ENCODE measurements at regions of chr6 and their contacts with region 1.

Region 1: GRCh38 chr6:157667211-157668008 is 155.6 kb upstream of the SNX9 start:
- DNase-seq: peak; percentile 71
- ATAC-seq: peak; percentile 65
- H3K4me3 Mint-ChIP-seq: no peak overlapping the region
- H3K27ac Mint-ChIP-seq: no peak overlapping the region
- H3K4me1 Mint-ChIP-seq: peaks cover 23% of the 10 kb centered on the region
- H3K27me3 Mint-ChIP-seq: peaks cover 3% of the 10 kb centered on the region
- CTCF ChIP-seq: peak; percentile 99

Region 2: GRCh38 chr6:157314705-157315321 is 352.6 kb before region 1 on chr6:
- CTCF ChIA-PET with region 1: interaction called, 80 read pairs
- POLR2A ChIA-PET with region 1: interaction called, 4 read pairs
- intact Hi-C with region 1: loop called (anchors 2 kb)
- DNase-seq: peak; percentile 32
- ATAC-seq: peak; percentile 93
- H3K4me3 Mint-ChIP-seq: no peak overlapping the region
- H3K27ac Mint-ChIP-seq: no peak overlapping the region
- H3K4me1 Mint-ChIP-seq: peaks cover 6% of the 10 kb centered on the region
- H3K27me3 Mint-ChIP-seq: no peaks in the 10 kb centered on the region
- CTCF ChIP-seq: peak; percentile 90

Region 3: GRCh38 chr6:157323255-157323965 is 344.0 kb before region 1 on chr6 and contains the start of gene TMEM242:
- CTCF ChIA-PET with region 1: interaction called, 10 read pairs
- POLR2A ChIA-PET with region 1: no interaction called
- intact Hi-C with region 1: no loop called
- DNase-seq: peak; percentile 91
- ATAC-seq: peak; percentile 94
- H3K4me3 Mint-ChIP-seq: peak within 1 kb of the TSS; percentile 91
- H3K27ac Mint-ChIP-seq: peak within 1 kb of the TSS; percentile 88
- H3K4me1 Mint-ChIP-seq: peaks cover 31% of the 10 kb centered on the region
- H3K27me3 Mint-ChIP-seq: peaks cover 21% of the 10 kb centered on the region
- CTCF ChIP-seq: peak; percentile 16
- total RNA-seq, gene TMEM242: 7.8 to 8.0 TPM

Region 4: DNA sequence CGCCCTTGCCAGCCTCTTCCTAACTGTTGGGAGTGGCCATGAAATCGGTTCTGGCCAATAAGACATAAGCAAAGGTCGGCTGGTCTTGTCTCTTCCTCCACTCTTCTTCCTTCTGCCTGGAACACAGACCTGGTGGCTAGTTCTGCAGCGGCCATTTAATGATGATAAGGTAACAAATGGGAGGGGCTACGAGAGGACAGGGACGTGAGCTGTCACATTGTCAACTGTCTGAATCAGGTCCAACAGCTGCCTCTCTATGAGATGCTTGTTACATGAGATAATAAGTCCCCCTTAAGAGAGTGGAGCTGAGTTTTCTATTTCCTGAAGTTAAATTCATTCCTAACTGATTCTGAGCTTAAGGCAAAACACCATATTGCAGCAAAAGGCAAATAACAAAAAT is 331.6 kb before region 1 on chr6:
- CTCF ChIA-PET with region 1: interaction called, 12 read pairs
- POLR2A ChIA-PET with region 1: no interaction called
- intact Hi-C with region 1: no loop called
- DNase-seq: no peak
- ATAC-seq: no peak
- H3K4me3 Mint-ChIP-seq: no peak overlapping the region
- H3K27ac Mint-ChIP-seq: no peak overlapping the region
- H3K4me1 Mint-ChIP-seq: no peaks in the 10 kb centered on the region
- H3K27me3 Mint-ChIP-seq: peaks cover 27% of the 10 kb centered on the region
- CTCF ChIP-seq: no peak

Region 5: DNA sequence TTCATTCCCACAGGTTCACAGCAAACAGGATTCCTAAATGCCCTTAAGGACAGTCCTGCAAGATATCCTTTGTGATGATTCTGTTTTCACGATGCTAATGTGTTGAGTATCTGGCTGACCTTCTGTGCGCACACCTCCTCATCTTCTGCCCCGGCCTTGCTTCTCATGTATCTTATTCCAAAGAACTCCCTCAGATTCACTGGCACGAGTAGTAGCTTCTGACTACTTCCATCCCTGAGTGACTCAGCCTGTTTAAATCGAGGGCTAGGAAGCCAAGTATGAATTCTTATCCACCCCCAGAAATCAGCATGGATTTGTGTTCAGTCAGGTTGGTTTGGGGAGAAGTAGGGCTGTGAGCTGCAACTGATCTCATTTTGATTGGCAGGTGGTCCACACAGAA is 34.6 kb before region 1 on chr6:
- CTCF ChIA-PET with region 1: no interaction called
- POLR2A ChIA-PET with region 1: no interaction called
- intact Hi-C with region 1: no loop called
- DNase-seq: no peak
- ATAC-seq: no peak
- H3K4me3 Mint-ChIP-seq: no peak overlapping the region
- H3K27ac Mint-ChIP-seq: no peak overlapping the region
- H3K4me1 Mint-ChIP-seq: peaks cover 7% of the 10 kb centered on the region
- H3K27me3 Mint-ChIP-seq: no peaks in the 10 kb centered on the region
- CTCF ChIP-seq: no peak

Region 6: DNA sequence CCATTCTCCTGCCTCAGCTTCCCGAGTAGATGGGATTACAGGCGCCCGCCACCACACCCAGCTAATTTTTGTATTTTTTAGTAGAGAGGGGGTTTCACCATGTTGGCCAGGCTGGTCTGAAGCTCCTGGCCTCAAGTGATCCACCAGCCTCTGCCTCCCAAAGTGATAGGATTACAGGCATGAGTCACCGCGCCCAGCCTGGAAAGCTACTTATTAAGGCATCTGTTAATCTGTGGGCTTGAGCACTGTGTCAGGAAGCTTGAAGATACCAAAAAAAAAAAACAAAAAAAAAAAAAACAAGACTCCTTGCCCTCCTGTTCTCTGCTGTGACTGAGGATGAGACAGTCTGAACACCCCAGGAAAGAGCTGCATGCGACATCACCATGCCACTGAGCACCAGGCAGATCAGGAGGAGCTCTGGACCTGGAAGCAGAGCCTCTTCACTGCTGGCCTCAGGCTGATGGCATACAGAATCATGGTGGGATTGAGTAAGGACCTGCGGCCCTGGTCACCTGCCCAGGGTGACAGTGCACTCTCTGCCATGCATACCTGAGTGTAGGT is 10.9 kb before region 1 on chr6:
- CTCF ChIA-PET with region 1: interaction called, 13 read pairs
- POLR2A ChIA-PET with region 1: no interaction called
- intact Hi-C with region 1: no loop called
- DNase-seq: no peak
- ATAC-seq: no peak
- H3K4me3 Mint-ChIP-seq: no peak overlapping the region
- H3K27ac Mint-ChIP-seq: no peak overlapping the region
- H3K4me1 Mint-ChIP-seq: no peaks in the 10 kb centered on the region
- H3K27me3 Mint-ChIP-seq: no peaks in the 10 kb centered on the region
- CTCF ChIP-seq: no peak

Region 7: GRCh38 chr6:157946865-157947532 is 279.6 kb after region 1 on chr6:
- CTCF ChIA-PET with region 1: interaction called, 16 read pairs
- POLR2A ChIA-PET with region 1: no interaction called
- intact Hi-C with region 1: no loop called
- DNase-seq: peak; percentile 36
- ATAC-seq: peak; percentile 66
- H3K4me3 Mint-ChIP-seq: no peak overlapping the region
- H3K27ac Mint-ChIP-seq: peak overlapping the region; percentile 62
- H3K4me1 Mint-ChIP-seq: peaks cover 32% of the 10 kb centered on the region
- H3K27me3 Mint-ChIP-seq: no peaks in the 10 kb centered on the region
- CTCF ChIP-seq: peak; percentile 66

Measured in activated CD8-positive, alpha-beta T cell treated with anti-CD3 and anti-CD28 coated beads for 36 hours (primary cell).